MCF 10A (cell line): ENCODE measurements at regions of chr17 and their contacts with region 1.

Region 1: DNA sequence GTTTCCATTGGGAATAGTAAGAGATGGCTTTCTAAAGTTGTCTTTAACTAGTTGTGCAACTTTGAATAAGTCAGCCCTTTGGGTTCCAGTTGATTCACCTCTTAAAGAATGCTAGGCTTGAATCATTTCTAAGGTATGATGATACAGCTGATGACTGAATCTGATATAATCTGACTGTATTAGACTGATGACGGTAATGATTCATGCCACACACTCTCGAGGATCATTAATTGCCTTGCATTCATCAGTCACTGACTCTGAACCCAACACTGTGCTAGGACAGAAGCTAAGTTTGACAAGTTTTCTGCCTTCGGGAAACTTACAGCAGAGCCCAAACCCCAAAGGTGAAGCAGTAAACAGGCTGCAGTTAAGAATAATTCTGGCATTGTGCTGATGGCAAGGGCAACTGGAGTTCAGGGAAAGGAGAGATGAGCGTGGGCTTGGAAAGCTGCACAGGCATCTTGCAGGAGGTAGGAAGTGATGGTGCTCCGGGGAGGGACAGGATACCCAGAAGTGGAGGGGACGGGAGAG is 25.8 kb downstream of the ASIC2 start:
- DNase-seq: peak; percentile 66
- H3K4me3 Mint-ChIP-seq: no peak overlapping the region
- H3K27ac Mint-ChIP-seq: no peak overlapping the region
- H3K4me1 Mint-ChIP-seq: peaks cover 17% of the 10 kb centered on the region
- H3K27me3 Mint-ChIP-seq: no peaks in the 10 kb centered on the region
- CTCF ChIP-seq: no peak

Region 2: DNA sequence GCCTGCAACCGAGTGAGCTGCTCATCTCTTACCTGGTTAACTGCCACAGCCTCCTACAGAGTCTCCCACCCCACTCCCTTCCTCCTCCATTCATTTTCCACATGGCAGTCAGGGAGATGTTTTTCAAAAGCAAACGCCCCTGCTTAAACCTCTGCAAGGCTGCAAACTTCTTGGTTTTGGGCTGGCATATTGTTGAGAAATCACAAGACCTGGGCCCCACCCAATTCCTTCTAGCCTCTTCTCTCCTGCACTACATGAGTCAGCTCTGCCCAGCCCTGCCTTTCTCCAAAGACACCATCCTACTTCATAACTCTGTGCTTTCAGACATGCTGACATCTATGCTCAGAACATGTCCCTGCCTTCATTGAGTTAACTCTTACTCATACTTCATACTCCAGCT is 139.6 kb before region 1 on chr17:
- CTCF ChIA-PET with region 1: no interaction called
- POLR2A ChIA-PET with region 1: interaction called, 3 read pairs
- intact Hi-C with region 1: loop called (anchors 2 kb)
- DNase-seq: peak; percentile 76
- H3K4me3 Mint-ChIP-seq: peak overlapping the region; percentile 35
- H3K27ac Mint-ChIP-seq: peak overlapping the region; percentile 20
- H3K4me1 Mint-ChIP-seq: peaks cover 35% of the 10 kb centered on the region
- H3K27me3 Mint-ChIP-seq: peaks cover 3% of the 10 kb centered on the region
- CTCF ChIP-seq: no peak

Region 3: DNA sequence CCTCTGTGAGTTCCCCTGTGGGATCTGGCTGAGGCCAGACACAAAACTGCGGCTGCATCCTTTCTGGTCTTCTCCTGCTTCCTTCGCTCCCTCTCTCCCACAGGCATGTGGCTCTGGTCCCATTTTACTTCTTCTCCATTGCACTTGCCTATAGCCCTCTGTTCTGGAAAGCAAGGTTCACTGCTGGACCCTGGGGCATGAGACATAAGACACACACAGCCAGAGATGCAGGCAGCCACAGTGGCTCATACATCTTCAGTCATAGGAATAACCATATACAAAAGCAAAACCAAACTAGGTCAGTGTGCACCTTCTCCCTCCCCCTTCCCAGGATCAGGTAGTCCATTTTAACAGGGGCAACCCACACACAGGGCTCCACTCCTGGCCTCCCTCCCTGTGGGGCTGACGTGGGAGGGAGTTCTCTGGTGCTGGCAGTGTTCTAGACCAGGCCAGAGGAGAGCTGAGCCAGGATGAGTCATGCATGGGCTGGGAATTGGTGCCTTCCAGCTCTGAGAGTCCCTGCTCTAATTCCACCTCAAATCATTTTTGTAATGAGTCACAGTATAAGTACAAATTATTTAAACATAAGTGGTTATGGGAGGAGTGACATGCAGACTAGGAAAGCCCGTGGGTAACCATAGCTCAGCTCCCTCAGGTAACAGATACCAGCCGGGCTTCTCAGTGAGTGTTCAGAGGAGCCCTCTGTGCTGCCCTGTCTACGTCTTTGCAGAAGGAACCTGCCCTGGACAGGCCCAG is 32.2 kb before region 1 on chr17:
- CTCF ChIA-PET with region 1: no interaction called
- POLR2A ChIA-PET with region 1: interaction called, 4 read pairs
- intact Hi-C with region 1: loop called (anchors 1 kb)
- DNase-seq: peak; percentile 95
- H3K4me3 Mint-ChIP-seq: no peak overlapping the region
- H3K27ac Mint-ChIP-seq: peak overlapping the region; percentile 11
- H3K4me1 Mint-ChIP-seq: peaks cover 12% of the 10 kb centered on the region
- H3K27me3 Mint-ChIP-seq: no peaks in the 10 kb centered on the region
- CTCF ChIP-seq: no peak

Region 4: DNA sequence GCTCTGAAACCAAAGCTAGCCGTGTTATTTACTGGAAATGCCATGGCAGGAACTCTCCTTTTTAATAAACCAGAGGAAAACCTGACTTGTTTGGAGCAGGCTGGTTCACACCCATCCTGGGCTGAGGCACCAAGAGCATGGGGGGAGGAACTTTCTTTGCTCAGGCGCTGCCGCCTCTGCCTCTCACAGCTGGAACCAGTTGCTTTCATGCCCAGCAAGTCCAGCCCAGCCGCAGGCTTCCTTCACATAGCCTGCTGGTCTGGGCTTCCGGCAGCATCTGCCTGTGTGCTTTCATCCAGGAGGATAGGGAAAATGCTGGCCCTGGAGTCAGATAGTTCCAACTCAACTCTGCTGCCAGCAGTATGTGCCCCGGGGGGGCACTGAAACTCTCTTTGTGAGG is 113.9 kb after region 1 on chr17:
- CTCF ChIA-PET with region 1: no interaction called
- POLR2A ChIA-PET with region 1: no interaction called
- intact Hi-C with region 1: no loop called
- DNase-seq: no peak
- H3K4me3 Mint-ChIP-seq: no peak overlapping the region
- H3K27ac Mint-ChIP-seq: no peak overlapping the region
- H3K4me1 Mint-ChIP-seq: no peaks in the 10 kb centered on the region
- H3K27me3 Mint-ChIP-seq: no peaks in the 10 kb centered on the region
- CTCF ChIP-seq: no peak